GM12878 (cell line): ENCODE measurements at regions of chr17 and their contacts with region 1.

Region 1: GRCh38 chr17:73231841-73232586 is 29.7 kb downstream of the CPSF4L start:
- DNase-seq: peak; percentile 86
- ATAC-seq: peak; percentile 83
- H3K4me3 ChIP-seq: peak overlapping the region; percentile 87
- H3K27ac ChIP-seq: peak overlapping the region; percentile 89
- H3K4me1 ChIP-seq: peaks cover 20% of the 10 kb centered on the region
- H3K27me3 ChIP-seq: no peaks in the 10 kb centered on the region
- CTCF ChIP-seq: peak in 1 of 3 experiments; percentile 19; a peak in 2 of 6 replicates
- EP300 ChIP-seq: no peak; a peak in 1 of 4 replicates
- POLR2A ChIP-seq: peak; percentile 93
- RAD21 ChIP-seq: no peak

Region 2: DNA sequence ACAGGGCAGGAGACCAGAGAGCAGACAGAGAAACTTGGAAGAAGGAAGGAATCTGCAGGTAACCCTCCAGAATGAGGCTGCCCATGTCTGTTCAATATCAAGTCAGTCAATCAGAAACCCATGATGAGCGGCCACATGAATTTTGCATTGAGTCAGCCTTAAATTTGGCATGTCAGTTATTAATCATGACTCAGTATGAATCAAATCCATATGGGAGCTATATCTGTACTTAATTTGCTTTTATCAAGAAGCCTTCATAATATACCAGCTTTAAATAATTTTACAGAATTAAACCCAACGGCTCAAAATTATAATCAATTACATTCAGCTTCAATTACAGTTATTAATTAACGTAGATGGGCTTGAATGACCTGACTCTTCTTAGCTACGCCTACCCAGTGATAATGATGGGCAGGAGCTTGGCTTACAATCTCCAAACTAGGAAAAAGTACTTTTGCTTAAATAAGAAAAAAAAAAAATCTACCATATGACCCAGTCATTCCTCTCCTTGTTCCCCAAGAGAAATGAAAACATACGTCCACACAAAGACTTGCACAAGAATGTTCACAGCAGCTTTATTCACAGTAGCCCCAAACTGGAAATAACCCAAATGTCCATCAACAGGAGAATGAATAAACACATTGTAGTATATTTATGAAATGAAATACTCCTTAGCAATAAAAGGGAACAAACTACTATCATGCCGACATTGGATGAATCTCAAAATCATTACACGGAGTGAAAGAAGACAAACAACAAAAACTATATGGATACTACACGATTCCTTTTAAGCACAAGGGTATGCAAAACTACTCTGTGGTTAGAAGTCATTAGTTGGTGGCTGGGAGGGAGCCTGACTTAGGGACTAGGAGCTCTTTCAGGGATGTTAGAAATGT is 188.1 kb before region 1 on chr17:
- CTCF ChIA-PET with region 1: no interaction called
- POLR2A ChIA-PET with region 1: no interaction called
- RAD21 ChIA-PET with region 1: no interaction called
- SMC1A ChIA-PET with region 1: no interaction called
- in situ Hi-C with region 1: no loop called
- intact Hi-C with region 1: no loop called
- DNase-seq: no peak
- ATAC-seq: peak; percentile 64
- H3K4me3 ChIP-seq: no peak overlapping the region
- H3K27ac ChIP-seq: peak overlapping the region; percentile 31; the same call in 1 of the 2 replicates
- H3K4me1 ChIP-seq: peaks cover 7% of the 10 kb centered on the region
- H3K27me3 ChIP-seq: no peaks in the 10 kb centered on the region
- CTCF ChIP-seq: no peak
- EP300 ChIP-seq: no peak
- POLR2A ChIP-seq: no peak
- RAD21 ChIP-seq: no peak

Region 3: DNA sequence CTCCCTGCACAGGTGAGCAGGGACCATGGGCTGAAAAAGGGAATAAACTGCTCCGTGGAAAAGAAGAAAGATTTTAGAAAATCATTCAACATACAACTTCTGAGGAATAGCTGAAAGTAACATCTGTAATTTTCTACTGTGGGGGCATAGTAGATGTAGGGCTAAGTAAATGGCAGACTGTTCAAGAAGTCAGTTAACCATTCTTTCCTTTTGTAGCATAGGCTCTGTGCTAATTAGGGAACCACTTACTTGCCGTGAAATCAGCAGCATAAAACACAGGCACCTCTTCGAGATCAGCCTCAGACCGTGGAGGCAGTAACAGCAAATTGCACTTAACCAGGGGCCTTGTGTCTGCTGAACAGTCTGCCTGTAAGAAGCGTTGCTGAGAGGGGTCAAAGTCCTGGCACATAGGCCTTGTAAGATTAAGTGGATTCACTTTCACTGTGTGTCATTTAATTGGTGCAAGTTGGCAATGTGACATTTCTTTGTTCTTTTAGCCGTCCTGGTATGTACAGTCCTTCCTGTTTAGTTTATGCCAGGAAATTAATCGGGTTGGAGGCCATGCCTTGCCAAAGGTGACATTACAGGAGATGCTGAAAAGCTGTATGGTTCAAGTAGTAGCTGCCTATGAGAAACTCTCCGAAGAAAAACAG is 28.8 kb before region 1 on chr17:
- CTCF ChIA-PET with region 1: interaction called, 3 read pairs
- POLR2A ChIA-PET with region 1: interaction called, 11 read pairs
- RAD21 ChIA-PET with region 1: interaction called, 21 read pairs
- SMC1A ChIA-PET with region 1: interaction called, 11 read pairs
- in situ Hi-C with region 1: no loop called
- intact Hi-C with region 1: no loop called
- DNase-seq: no peak
- ATAC-seq: peak; percentile 91
- H3K4me3 ChIP-seq: no peak overlapping the region
- H3K27ac ChIP-seq: no peak overlapping the region
- H3K4me1 ChIP-seq: no peaks in the 10 kb centered on the region
- H3K27me3 ChIP-seq: no peaks in the 10 kb centered on the region
- CTCF ChIP-seq: no peak
- EP300 ChIP-seq: no peak
- POLR2A ChIP-seq: no peak
- RAD21 ChIP-seq: no peak

Region 4: DNA sequence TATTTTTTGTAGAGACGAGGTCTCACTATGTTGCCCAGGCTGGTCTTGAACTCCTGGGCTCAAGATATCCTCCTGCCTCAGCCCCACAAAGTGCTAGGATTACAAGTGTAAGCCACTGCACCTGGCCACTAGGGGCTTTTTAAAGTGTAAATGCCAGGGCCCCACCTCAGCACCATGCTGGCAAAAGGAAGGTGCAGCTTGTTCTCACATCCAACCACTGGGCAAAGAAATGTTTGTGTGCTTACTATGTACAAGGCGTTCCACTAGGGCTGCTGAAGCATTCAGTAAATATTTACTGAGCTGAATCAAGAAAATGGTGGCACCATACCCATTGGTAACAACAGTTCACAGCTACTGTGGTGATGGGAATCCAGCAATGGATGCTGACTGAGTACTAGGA is 16.6 kb before region 1 on chr17:
- CTCF ChIA-PET with region 1: interaction called, 24 read pairs
- POLR2A ChIA-PET with region 1: interaction called, 7 read pairs
- RAD21 ChIA-PET with region 1: no interaction called
- SMC1A ChIA-PET with region 1: interaction called, 27 read pairs
- in situ Hi-C with region 1: no loop called
- intact Hi-C with region 1: no loop called
- DNase-seq: no peak
- ATAC-seq: peak; percentile 79
- H3K4me3 ChIP-seq: no peak overlapping the region
- H3K27ac ChIP-seq: no peak overlapping the region
- H3K4me1 ChIP-seq: peaks cover 4% of the 10 kb centered on the region; the same call in 1 of the 2 replicates
- H3K27me3 ChIP-seq: no peaks in the 10 kb centered on the region
- CTCF ChIP-seq: peak in 2 of 3 experiments; percentile 0 to 30; a peak in 1 of 6 replicates
- EP300 ChIP-seq: no peak
- POLR2A ChIP-seq: no peak
- RAD21 ChIP-seq: no peak

Region 5: DNA sequence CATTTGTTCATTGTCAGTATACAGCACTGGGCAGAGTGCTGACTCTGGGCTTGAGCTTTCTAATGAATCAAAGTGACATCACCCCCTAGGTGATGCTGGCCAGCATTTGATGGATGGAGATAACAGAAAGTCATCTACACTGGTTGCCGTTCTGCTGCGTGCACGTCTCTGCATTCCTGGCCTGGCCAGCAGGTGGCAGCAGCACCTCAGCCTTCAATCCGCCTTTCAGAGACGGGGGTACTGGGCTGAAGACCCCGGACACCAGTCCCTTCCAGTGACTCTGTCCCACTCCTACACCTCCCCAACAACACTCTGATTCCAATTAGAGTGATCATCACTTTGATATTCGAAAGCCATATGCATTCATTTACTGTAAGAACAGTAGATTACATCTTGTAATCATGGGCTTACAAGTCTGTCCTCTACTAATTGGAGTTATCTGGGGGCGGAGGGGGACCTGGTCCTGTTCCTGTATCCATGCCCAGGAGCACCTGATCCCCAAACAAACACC is 23.7 kb after region 1 on chr17:
- CTCF ChIA-PET with region 1: interaction called, 10 read pairs
- POLR2A ChIA-PET with region 1: no interaction called
- RAD21 ChIA-PET with region 1: interaction called, 4 read pairs
- SMC1A ChIA-PET with region 1: interaction called, 7 read pairs
- in situ Hi-C with region 1: no loop called
- intact Hi-C with region 1: no loop called
- DNase-seq: no peak
- ATAC-seq: peak; percentile 94
- H3K4me3 ChIP-seq: no peak overlapping the region
- H3K27ac ChIP-seq: no peak overlapping the region
- H3K4me1 ChIP-seq: no peaks in the 10 kb centered on the region
- H3K27me3 ChIP-seq: no peaks in the 10 kb centered on the region
- CTCF ChIP-seq: peak; percentile 95 to 98 (median 97)
- EP300 ChIP-seq: no peak
- POLR2A ChIP-seq: no peak
- RAD21 ChIP-seq: peak; percentile 97